Pancreas (tissue), 10 donors: ENCODE measurements at regions of chr5 and their contacts with region 1.

Region 1: GRCh38 chr5:149656576-149657182 is 73.4 kb upstream of the PPARGC1B start:
- DNase-seq: peak in 1 of 6 donors; percentile 11
- ATAC-seq: peak in 2 of 4 donors; percentile 24 to 45
- H3K4me3 ChIP-seq: no peak overlapping the region
- H3K27ac ChIP-seq: no peak overlapping the region
- H3K4me1 ChIP-seq: peaks cover 10 to 12% (median 11%) of the 10 kb centered on the region in 3 donors
- H3K27me3 ChIP-seq: no peaks in the 10 kb centered on the region
- CTCF ChIP-seq: peak; percentile 22 to 44 (median 30)

Region 2: GRCh38 chr5:149271716-149272563 is 384.7 kb before region 1 on chr5 and contains the start of gene AFAP1L1:
- intact Hi-C with region 1: no loop called
- DNase-seq: peak; percentile 25 to 79 (median 36)
- ATAC-seq: peak; percentile 78 to 91 (median 86)
- H3K4me3 ChIP-seq: peak within 1 kb of the TSS; percentile 19 to 60 (median 32)
- H3K27ac ChIP-seq: no peak within 1 kb of the TSS
- H3K4me1 ChIP-seq: peaks cover 0 to 3% (median 0%) of the 10 kb centered on the region in 3 donors
- H3K27me3 ChIP-seq: no peaks in the 10 kb centered on the region
- CTCF ChIP-seq: no peak
- total RNA-seq, gene AFAP1L1: 0.54 to 2.4 (median 1.00) TPM

Region 3: GRCh38 chr5:149702934-149703646 is 46.4 kb after region 1 on chr5:
- intact Hi-C with region 1: loop called in 1 of 3 experiments (anchors 10 kb)
- DNase-seq: no peak
- ATAC-seq: no peak
- H3K4me3 ChIP-seq: no peak overlapping the region
- H3K27ac ChIP-seq: no peak overlapping the region
- H3K4me1 ChIP-seq: no peaks in the 10 kb centered on the region
- H3K27me3 ChIP-seq: no peaks in the 10 kb centered on the region
- CTCF ChIP-seq: no peak